Heart left ventricle (tissue), 16 donors: ENCODE measurements at regions of chr17 and their contacts with region 1.

Region 1: GRCh38 chr17:45425125-45425983 is 7.3 kb downstream of the ARHGAP27 start:
- DNase-seq: peak; percentile 56 to 79 (median 70)
- ATAC-seq: peak; percentile 72 to 82 (median 79)
- H3K4me3 ChIP-seq: peak overlapping the region; percentile 10 to 59 (median 47)
- H3K27ac ChIP-seq: peak overlapping the region; percentile 71 to 92 (median 86)
- H3K4me1 ChIP-seq: peaks cover 0 to 48% (median 24%) of the 10 kb centered on the region in 12 donors
- H3K27me3 ChIP-seq: peaks cover 1 to 15% (median 10%) of the 10 kb centered on the region in 9 donors
- CTCF ChIP-seq: peak in 6 of 12 donors; percentile 18 to 57 (median 41)
- POLR2A ChIP-seq: no peak

Region 2: GRCh38 chr17:45247429-45248131 is 177.8 kb before region 1 on chr17:
- intact Hi-C with region 1: no loop called
- DNase-seq: peak; percentile 84 to 91 (median 90)
- ATAC-seq: peak; percentile 79 to 91 (median 86)
- H3K4me3 ChIP-seq: peak overlapping the region; percentile 24 to 63 (median 54)
- H3K27ac ChIP-seq: peak overlapping the region in 10 of 12 donors; percentile 24 to 84 (median 46)
- H3K4me1 ChIP-seq: peaks cover 0 to 35% (median 18%) of the 10 kb centered on the region in 12 donors
- H3K27me3 ChIP-seq: no peaks in the 10 kb centered on the region
- CTCF ChIP-seq: no peak
- POLR2A ChIP-seq: peak in 1 of 2 donors; percentile 17

Region 3: DNA sequence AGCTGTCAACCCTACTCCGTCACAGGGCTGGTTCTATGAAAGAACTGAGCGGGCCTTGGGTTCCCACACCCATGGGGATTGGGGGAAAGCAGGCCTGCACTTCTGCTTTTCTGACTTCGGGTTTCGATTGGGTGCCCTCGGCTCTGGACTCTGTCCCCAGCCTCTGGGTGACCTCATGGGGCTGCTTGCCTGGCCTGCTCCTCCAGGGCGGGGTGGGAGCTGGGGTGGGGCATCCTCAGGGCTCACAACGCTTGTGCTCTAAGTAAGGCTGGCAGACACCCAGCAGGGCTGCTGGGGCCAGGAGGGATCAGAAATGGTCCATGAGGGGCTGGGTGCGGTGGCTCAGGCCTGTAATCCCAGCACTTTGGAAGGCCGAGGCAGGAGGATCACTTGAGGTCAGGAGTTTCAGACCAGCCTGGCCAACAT is 11.8 kb before region 1 on chr17:
- intact Hi-C with region 1: loop called in 1 of 10 experiments (anchors 1 kb)
- DNase-seq: peak in 4 of 5 donors; percentile 57 to 77 (median 72)
- ATAC-seq: peak in 3 of 4 donors; percentile 18 to 64 (median 47)
- H3K4me3 ChIP-seq: no peak overlapping the region
- H3K27ac ChIP-seq: peak overlapping the region in 1 of 12 donors; percentile 73
- H3K4me1 ChIP-seq: peaks cover 6 to 70% (median 44%) of the 10 kb centered on the region in 12 donors
- H3K27me3 ChIP-seq: no peaks in the 10 kb centered on the region
- CTCF ChIP-seq: no peak
- POLR2A ChIP-seq: no peak

Region 4: GRCh38 chr17:45719335-45720071 is 294.1 kb after region 1 on chr17:
- intact Hi-C with region 1: no loop called
- DNase-seq: no peak
- ATAC-seq: peak in 2 of 4 donors; percentile 51 to 63
- H3K4me3 ChIP-seq: no peak overlapping the region
- H3K27ac ChIP-seq: no peak overlapping the region
- H3K4me1 ChIP-seq: no peaks in the 10 kb centered on the region
- H3K27me3 ChIP-seq: peaks cover 0 to 45% (median 11%) of the 10 kb centered on the region in 9 donors
- CTCF ChIP-seq: peak in 7 of 12 donors; percentile 7 to 31 (median 24)
- POLR2A ChIP-seq: no peak